CD8-positive, alpha-beta T cell (primary cell): ENCODE measurements at regions of chr5 and their contacts with region 1.

Region 1: GRCh38 chr5:80093796-80094195 is 58.6 kb downstream of the THBS4 start:
- DNase-seq: no peak
- ATAC-seq: no peak
- H3K4me3 ChIP-seq: no peak overlapping the region
- H3K4me3 Mint-ChIP-seq: no peak overlapping the region
- H3K27ac ChIP-seq: no peak overlapping the region
- H3K27ac Mint-ChIP-seq: peak overlapping the region; percentile 74
- H3K4me1 ChIP-seq: peaks cover 22% of the 10 kb centered on the region
- H3K4me1 Mint-ChIP-seq: peaks cover 35% of the 10 kb centered on the region
- H3K27me3 ChIP-seq: no peaks in the 10 kb centered on the region
- H3K27me3 Mint-ChIP-seq: no peaks in the 10 kb centered on the region
- CTCF ChIP-seq: no peak

Region 2: DNA sequence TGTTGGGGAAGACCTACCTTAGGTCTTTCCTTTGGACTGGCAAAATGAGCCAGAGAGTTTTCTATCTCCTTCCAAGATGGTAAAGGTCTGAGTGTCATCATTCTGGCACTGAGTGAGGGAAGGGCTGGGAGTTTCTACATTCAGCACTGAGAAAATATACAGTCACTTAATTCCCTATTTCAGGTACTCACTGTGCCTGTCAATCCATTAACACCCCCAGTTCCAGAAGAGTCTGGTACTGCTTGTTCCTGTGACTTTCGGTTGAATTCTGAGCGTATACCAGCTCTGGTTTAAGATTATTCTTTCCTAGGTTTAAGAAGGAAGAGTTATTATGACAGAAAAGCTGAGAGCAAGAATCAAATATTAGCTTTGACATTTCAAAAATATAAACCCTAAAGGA is 171.2 kb before region 1 on chr5:
- CTCF ChIA-PET with region 1: no interaction called
- POLR2A ChIA-PET with region 1: no interaction called
- intact Hi-C with region 1: no loop called
- DNase-seq: no peak
- ATAC-seq: no peak
- H3K4me3 ChIP-seq: no peak overlapping the region
- H3K4me3 Mint-ChIP-seq: no peak overlapping the region
- H3K27ac ChIP-seq: no peak overlapping the region
- H3K27ac Mint-ChIP-seq: no peak overlapping the region
- H3K4me1 ChIP-seq: no peaks in the 10 kb centered on the region
- H3K4me1 Mint-ChIP-seq: no peaks in the 10 kb centered on the region
- H3K27me3 ChIP-seq: no peaks in the 10 kb centered on the region
- H3K27me3 Mint-ChIP-seq: no peaks in the 10 kb centered on the region
- CTCF ChIP-seq: no peak

Region 3: GRCh38 chr5:80083101-80083890 is 10.5 kb before region 1 on chr5:
- CTCF ChIA-PET with region 1: interaction called, 29 read pairs
- POLR2A ChIA-PET with region 1: no interaction called
- intact Hi-C with region 1: no loop called
- DNase-seq: peak in 5 of 9 experiments; percentile 15 to 69 (median 52)
- ATAC-seq: peak; percentile 83
- H3K4me3 ChIP-seq: peak overlapping the region; percentile 10 to 25
- H3K4me3 Mint-ChIP-seq: peak overlapping the region; percentile 78
- H3K27ac ChIP-seq: no peak overlapping the region
- H3K27ac Mint-ChIP-seq: peak overlapping the region; percentile 74
- H3K4me1 ChIP-seq: peaks cover 10% of the 10 kb centered on the region
- H3K4me1 Mint-ChIP-seq: peaks cover 11% of the 10 kb centered on the region
- H3K27me3 ChIP-seq: no peaks in the 10 kb centered on the region
- H3K27me3 Mint-ChIP-seq: no peaks in the 10 kb centered on the region
- CTCF ChIP-seq: peak; percentile 61

Region 4: GRCh38 chr5:80141147-80141671 is 47.4 kb after region 1 on chr5:
- CTCF ChIA-PET with region 1: interaction called, 7 read pairs
- POLR2A ChIA-PET with region 1: interaction called, 3 read pairs
- intact Hi-C with region 1: loop called (anchors 5 kb)
- DNase-seq: peak in 1 of 9 experiments; percentile 47
- ATAC-seq: no peak
- H3K4me3 ChIP-seq: no peak overlapping the region
- H3K4me3 Mint-ChIP-seq: peak overlapping the region; percentile 50
- H3K27ac ChIP-seq: peak overlapping the region; percentile 9 to 55
- H3K27ac Mint-ChIP-seq: peak overlapping the region; percentile 91
- H3K4me1 ChIP-seq: peaks cover 70% of the 10 kb centered on the region
- H3K4me1 Mint-ChIP-seq: peaks cover 74% of the 10 kb centered on the region
- H3K27me3 ChIP-seq: no peaks in the 10 kb centered on the region
- H3K27me3 Mint-ChIP-seq: no peaks in the 10 kb centered on the region
- CTCF ChIP-seq: no peak

Region 5: DNA sequence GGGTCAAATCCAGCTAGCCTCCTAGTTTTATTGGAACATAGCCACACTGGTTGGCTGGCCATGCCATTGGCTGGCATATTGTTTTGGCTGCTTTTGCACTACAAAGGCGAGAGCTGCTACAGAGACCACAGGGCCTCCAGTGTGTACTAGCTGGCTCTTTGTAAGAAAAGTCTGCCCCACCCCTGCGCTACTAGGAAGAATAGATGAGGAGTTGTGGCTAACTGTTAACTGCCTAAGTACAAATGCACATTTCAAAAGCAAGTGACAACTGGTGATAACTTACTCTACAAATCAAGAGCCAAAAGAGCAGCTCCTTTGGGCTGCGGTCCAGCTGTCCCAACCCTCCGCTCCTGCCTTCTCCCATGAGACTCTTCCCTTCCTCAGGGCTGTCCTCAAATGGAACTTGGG is 98.2 kb after region 1 on chr5:
- CTCF ChIA-PET with region 1: interaction called, 11 read pairs
- POLR2A ChIA-PET with region 1: interaction called, 7 read pairs
- intact Hi-C with region 1: loop called in 1 of 2 experiments (anchors 5 kb)
- DNase-seq: peak in 7 of 9 experiments; percentile 43 to 74 (median 64)
- ATAC-seq: peak; percentile 67
- H3K4me3 ChIP-seq: peak overlapping the region; percentile 17 to 34
- H3K4me3 Mint-ChIP-seq: peak overlapping the region; percentile 81
- H3K27ac ChIP-seq: peak overlapping the region; percentile 38 to 69
- H3K27ac Mint-ChIP-seq: peak overlapping the region; percentile 91
- H3K4me1 ChIP-seq: peaks cover 95% of the 10 kb centered on the region
- H3K4me1 Mint-ChIP-seq: peaks cover 84% of the 10 kb centered on the region
- H3K27me3 ChIP-seq: no peaks in the 10 kb centered on the region
- H3K27me3 Mint-ChIP-seq: no peaks in the 10 kb centered on the region
- CTCF ChIP-seq: no peak

Region 6: DNA sequence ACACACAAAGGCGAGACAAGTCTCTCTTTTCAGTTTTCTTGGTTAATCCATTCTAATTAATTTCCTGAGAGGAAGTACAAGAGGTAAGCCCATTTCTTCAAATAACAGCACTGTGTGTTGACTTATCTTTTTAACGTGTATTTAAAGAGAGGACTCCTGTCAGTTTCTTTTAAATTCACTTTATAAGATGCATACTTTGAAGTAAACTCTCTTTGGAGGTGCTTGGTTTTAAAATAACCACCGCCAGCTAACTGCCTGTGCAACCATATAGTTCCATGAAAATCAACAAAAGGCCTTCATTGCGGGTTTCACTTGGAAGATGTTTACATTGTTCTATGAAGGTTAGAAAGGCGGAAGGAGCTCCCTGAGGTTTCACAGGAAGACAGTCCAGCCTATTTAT is 175.1 kb after region 1 on chr5:
- CTCF ChIA-PET with region 1: interaction called, 70 read pairs
- POLR2A ChIA-PET with region 1: interaction called, 4 read pairs
- intact Hi-C with region 1: no loop called
- DNase-seq: peak in 1 of 9 experiments; percentile 33
- ATAC-seq: peak; percentile 16
- H3K4me3 ChIP-seq: no peak overlapping the region
- H3K4me3 Mint-ChIP-seq: peak overlapping the region; percentile 69
- H3K27ac ChIP-seq: no peak overlapping the region
- H3K27ac Mint-ChIP-seq: peak overlapping the region; percentile 95
- H3K4me1 ChIP-seq: peaks cover 41% of the 10 kb centered on the region
- H3K4me1 Mint-ChIP-seq: peaks cover 50% of the 10 kb centered on the region
- H3K27me3 ChIP-seq: no peaks in the 10 kb centered on the region
- H3K27me3 Mint-ChIP-seq: no peaks in the 10 kb centered on the region
- CTCF ChIP-seq: no peak

Region 7: DNA sequence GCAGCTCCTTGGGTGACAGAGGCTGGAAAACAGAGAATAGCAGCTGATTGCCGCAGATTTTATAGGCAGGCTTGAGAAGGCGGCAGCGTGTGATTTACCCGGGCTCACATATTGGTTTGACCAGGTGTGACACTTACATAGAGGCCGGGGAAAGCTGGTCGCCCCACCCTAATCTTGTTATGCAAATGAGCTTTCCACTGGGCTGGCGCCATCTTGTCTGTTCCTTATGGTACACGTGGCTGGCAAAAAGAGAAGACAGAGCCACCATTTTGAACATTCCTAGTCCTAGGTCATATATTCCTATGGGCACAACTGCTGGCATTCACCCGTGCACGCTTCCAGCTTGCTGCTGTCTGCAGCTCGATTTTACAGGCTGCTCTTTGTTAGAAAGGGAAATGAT is 214.7 kb after region 1 on chr5:
- CTCF ChIA-PET with region 1: interaction called, 138 read pairs
- POLR2A ChIA-PET with region 1: interaction called, 6 read pairs
- intact Hi-C with region 1: loop called (anchors 1 kb)
- DNase-seq: no peak
- ATAC-seq: no peak
- H3K4me3 ChIP-seq: no peak overlapping the region
- H3K4me3 Mint-ChIP-seq: no peak overlapping the region
- H3K27ac ChIP-seq: no peak overlapping the region
- H3K27ac Mint-ChIP-seq: no peak overlapping the region
- H3K4me1 ChIP-seq: no peaks in the 10 kb centered on the region
- H3K4me1 Mint-ChIP-seq: no peaks in the 10 kb centered on the region
- H3K27me3 ChIP-seq: no peaks in the 10 kb centered on the region
- H3K27me3 Mint-ChIP-seq: no peaks in the 10 kb centered on the region
- CTCF ChIP-seq: no peak